Spleen (tissue), 13 donors: ENCODE measurements at regions of chr6 and their contacts with region 1.

Region 1: GRCh38 chr6:134161036-134161435 is 108.6 kb upstream of the SLC2A12 start:
- DNase-seq: no peak
- H3K4me3 ChIP-seq: no peak overlapping the region
- H3K27ac ChIP-seq: no peak overlapping the region
- H3K4me1 ChIP-seq: no peaks in the 10 kb centered on the region
- H3K27me3 ChIP-seq: no peaks in the 10 kb centered on the region
- CTCF ChIP-seq: no peak
- POLR2A ChIP-seq: no peak

Region 2: GRCh38 chr6:134943522-134944111 is 782.6 kb after region 1 on chr6:
- intact Hi-C with region 1: loop called (anchors 5 kb)
- DNase-seq: no peak
- H3K4me3 ChIP-seq: no peak overlapping the region
- H3K27ac ChIP-seq: no peak overlapping the region
- H3K4me1 ChIP-seq: peaks cover 0 to 4% (median 0%) of the 10 kb centered on the region in 6 donors
- H3K27me3 ChIP-seq: no peaks in the 10 kb centered on the region
- CTCF ChIP-seq: no peak
- POLR2A ChIP-seq: no peak